Cardiac septum (tissue), 1 donor: ENCODE measurements at regions of chr12 and their contacts with region 1.

Region 1: GRCh38 chr12:47935184-47935583 is 28.2 kb upstream of the TMEM106C start:
- DNase-seq: peak; percentile 84

Region 2: GRCh38 chr12:47216150-47216677 is 719.0 kb before region 1 on chr12:
- intact Hi-C with region 1: no loop called
- DNase-seq: peak; percentile 81

Region 3: DNA sequence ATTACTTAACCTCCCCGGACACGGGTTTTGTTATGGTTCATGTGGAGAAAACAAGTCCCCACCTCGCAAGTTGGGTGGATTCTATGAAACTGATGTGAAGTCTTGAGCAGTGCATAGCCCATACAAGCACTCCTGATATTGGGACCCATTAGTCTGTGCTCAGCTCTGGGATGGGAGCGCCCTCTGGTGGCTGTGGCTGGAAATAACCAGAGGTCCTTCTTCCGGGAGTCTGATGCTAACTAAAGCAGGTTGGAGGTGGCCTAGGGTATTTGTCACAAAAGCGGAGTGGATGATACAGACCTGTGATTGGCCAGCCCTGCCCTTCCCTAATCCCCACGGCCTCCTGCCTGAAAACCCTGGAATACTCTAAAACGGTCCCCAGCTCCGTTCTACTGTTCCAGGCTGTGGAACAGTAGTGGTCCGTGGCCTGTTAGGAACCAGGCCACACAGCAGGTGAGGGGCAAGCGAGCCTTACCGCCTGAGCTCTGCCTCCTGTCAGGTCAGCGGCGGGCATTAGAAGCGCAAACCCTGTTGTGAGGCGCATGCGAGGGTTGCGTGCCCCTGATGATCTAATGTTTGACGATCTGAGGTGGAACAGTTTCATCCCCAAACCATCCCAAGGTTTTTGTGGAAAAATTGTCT is 155.8 kb before region 1 on chr12:
- intact Hi-C with region 1: loop called (anchors 10 kb)
- DNase-seq: peak; percentile 94